Posterior cingulate gyrus (tissue), 11 donors: ENCODE measurements at regions of chr9 and their contacts with region 1.

Region 1: GRCh38 chr9:137240861-137241489 is at the start of gene TUBB4B:
- DNase-seq: peak; percentile 98 to 100 (median 99)

Region 2: DNA sequence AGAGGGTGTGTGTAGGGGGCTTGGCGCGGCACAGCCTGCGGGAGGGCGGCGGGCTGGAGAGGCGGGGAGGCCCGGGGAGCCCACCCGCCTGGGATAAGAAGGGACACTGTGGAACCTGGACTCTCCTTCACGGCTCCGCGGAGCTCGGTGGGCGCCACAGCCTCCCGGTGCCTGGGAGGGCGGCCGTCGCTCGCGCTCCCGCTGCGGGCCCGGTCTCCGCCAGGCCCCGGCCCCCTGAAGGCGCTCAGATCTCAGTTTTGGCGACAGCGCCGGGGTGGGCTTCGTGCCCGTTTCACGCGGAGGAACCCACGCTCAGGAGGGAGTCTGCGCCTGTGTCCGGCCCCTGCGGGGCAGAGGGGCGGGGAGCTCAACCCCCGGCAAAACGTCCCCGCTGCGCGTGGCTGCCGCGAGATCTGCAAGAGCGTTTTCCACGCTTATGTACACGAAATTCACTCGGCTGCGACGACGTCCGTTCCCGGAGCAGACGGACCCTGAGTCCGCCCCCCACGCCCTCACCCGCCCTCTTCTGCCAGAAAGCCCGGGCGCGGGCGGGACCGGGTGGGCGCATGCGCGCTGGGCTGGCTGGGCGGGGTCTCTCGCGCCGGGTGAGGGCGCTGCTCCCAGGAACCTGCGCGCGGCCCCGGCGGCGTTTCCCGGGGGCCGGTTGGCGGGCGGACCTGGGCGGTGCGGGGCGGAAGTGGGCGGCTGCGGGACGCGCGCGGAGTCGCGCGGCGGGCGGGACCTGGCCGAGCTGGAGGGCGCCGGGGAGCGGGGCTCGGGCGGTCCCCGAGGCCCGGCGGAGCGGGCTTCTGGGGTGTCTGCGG is 13.9 kb after region 1 on chr9 and contains the start of gene NELFB:
- intact Hi-C with region 1: loop called (anchors 1 kb)
- DNase-seq: peak; percentile 90 to 99 (median 93)

Region 3: GRCh38 chr9:137551651-137552384 is 310.8 kb after region 1 on chr9 and contains the start of gene MRPL41:
- intact Hi-C with region 1: no loop called
- DNase-seq: peak; percentile 77 to 98 (median 87)